Activated CD4-positive, alpha-beta T cell treated with anti-CD3 and anti-CD28 coated beads for 36 hours (primary cell): ENCODE measurements at regions of chr2 and their contacts with region 1.

Region 1: DNA sequence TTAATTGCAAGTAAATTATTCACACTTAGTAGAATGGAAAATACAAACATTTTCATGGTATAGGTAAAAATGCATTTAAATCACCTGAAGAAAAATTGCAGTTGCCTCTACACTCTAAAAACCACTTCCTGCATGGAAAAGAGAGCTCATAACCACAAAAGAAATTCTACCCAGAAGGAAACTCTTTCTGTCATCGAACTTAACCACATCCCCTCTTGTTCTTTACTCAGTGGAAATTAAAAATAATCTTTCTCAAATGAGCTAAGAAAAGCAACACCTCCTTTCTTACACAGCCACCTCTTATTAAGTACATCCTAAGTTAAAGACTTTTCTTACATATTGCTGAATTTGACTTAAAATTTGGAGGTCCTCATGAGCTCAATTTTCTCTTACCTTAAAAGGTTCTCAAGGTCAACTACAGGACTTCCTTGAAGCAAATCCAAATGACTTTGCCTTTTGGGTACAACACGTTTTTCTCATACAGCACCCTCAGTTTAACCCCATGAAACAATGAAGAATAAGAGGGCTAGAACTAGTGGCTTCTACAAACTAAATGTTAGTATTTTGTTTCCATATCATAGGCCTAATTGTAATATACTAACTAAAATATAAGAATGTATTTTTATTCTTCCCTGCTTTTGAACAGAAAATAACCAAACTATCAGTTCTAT is 109.1 kb upstream of the CRIM1 start:
- DNase-seq: no peak
- ATAC-seq: peak; percentile 82
- H3K4me3 Mint-ChIP-seq: peak overlapping the region; percentile 54
- H3K27ac Mint-ChIP-seq: peak overlapping the region; percentile 84
- H3K4me1 Mint-ChIP-seq: peaks cover 61% of the 10 kb centered on the region
- H3K27me3 Mint-ChIP-seq: peaks cover 4% of the 10 kb centered on the region

Region 2: DNA sequence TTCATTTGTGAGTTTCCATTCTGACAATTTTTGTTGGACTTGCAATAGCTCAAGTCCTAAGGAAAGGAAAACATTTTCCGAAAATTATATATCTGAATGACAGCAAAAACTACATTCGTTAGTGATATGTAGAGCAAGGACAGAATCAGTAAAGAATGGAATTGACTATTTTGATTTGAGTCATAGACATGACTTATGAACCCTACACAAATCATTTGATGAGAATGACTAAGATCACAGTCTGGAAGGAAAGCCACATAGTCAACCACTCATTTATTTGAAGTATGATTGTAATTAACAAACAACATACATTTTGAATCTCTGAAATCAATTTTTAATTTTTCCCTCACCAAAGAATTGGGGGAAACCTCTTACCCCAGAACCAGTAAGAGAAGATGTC is 122.5 kb before region 1 on chr2:
- CTCF ChIA-PET with region 1: no interaction called
- POLR2A ChIA-PET with region 1: no interaction called
- intact Hi-C with region 1: loop called in 1 of 2 experiments (anchors 5 kb)
- DNase-seq: no peak
- ATAC-seq: peak; percentile 91
- H3K4me3 Mint-ChIP-seq: no peak overlapping the region
- H3K27ac Mint-ChIP-seq: no peak overlapping the region
- H3K4me1 Mint-ChIP-seq: peaks cover 8% of the 10 kb centered on the region
- H3K27me3 Mint-ChIP-seq: peaks cover 27% of the 10 kb centered on the region

Region 3: GRCh38 chr2:36277146-36277808 is 30.8 kb after region 1 on chr2:
- CTCF ChIA-PET with region 1: no interaction called
- POLR2A ChIA-PET with region 1: no interaction called
- intact Hi-C with region 1: loop called (anchors 1 to 2 kb)
- DNase-seq: peak; percentile 59
- ATAC-seq: peak; percentile 96
- H3K4me3 Mint-ChIP-seq: no peak overlapping the region
- H3K27ac Mint-ChIP-seq: peak overlapping the region; percentile 11
- H3K4me1 Mint-ChIP-seq: no peaks in the 10 kb centered on the region
- H3K27me3 Mint-ChIP-seq: no peaks in the 10 kb centered on the region

Region 4: DNA sequence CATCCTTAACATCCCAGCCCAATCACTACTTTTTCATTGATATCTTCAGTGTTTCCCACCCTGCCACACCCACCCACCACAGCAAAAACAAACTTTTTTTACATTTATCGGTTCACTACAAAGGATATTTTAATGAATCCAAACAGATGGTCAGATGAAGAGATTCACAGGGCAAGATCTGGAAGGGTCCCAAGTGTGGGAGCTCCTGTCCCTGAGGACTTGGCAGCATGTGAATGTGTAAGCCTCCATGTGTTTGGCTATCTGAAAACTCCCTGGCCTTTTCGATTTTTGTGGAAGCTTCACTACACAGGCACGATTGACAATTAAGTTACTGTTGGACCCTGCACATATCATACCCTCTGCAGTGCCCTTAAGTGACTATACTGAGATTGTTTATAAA is 61.0 kb after region 1 on chr2:
- CTCF ChIA-PET with region 1: no interaction called
- POLR2A ChIA-PET with region 1: no interaction called
- intact Hi-C with region 1: loop called (anchors 1 to 5 kb)
- DNase-seq: no peak
- ATAC-seq: no peak
- H3K4me3 Mint-ChIP-seq: no peak overlapping the region
- H3K27ac Mint-ChIP-seq: no peak overlapping the region
- H3K4me1 Mint-ChIP-seq: peaks cover 23% of the 10 kb centered on the region
- H3K27me3 Mint-ChIP-seq: peaks cover 7% of the 10 kb centered on the region